ENCODE measurements at regions of chr1 and their contacts with region 1.

Region 1: DNA sequence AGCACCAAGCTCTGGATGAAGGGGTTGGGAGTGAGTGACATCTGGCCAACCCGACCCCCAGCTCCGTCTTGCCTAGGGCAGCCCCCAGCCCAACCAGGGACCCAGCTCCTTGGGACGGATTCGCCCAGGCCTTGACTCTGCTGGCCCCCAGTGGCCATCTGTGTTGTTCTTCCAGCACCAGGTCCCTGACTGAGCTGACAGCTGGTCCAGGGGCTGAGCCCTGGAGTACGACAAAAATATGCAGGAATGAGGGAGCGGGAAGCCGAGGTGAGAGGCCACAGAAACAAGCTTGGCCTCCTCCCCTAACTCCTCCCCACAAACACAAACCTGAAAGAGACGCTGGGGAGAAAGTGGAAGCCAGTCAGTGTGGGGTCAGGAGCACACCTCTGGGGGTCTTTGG is 55.0 kb upstream of the PAX7 start:
- H3K4me3 ChIP-seq: no peak overlapping the region
- H3K27ac ChIP-seq: no peak overlapping the region
- H3K4me1 ChIP-seq: no peaks in the 10 kb centered on the region
- CTCF ChIP-seq: peak; percentile 68

Region 2: GRCh38 chr1:18166929-18167328 is 408.7 kb before region 1 on chr1:
- CTCF ChIA-PET with region 1: interaction called, 3 read pairs
- POLR2A ChIA-PET with region 1: interaction called, 10 read pairs
- H3K4me3 ChIP-seq: no peak overlapping the region
- H3K27ac ChIP-seq: no peak overlapping the region
- H3K4me1 ChIP-seq: no peaks in the 10 kb centered on the region
- CTCF ChIP-seq: no peak

Region 3: GRCh38 chr1:18532390-18533170 is 43.0 kb before region 1 on chr1:
- CTCF ChIA-PET with region 1: interaction called, 11 read pairs
- POLR2A ChIA-PET with region 1: no interaction called
- H3K4me3 ChIP-seq: no peak overlapping the region
- H3K27ac ChIP-seq: no peak overlapping the region
- H3K4me1 ChIP-seq: no peaks in the 10 kb centered on the region
- CTCF ChIP-seq: no peak

Region 4: GRCh38 chr1:18556364-18556763 is 19.3 kb before region 1 on chr1:
- CTCF ChIA-PET with region 1: interaction called, 30 read pairs
- POLR2A ChIA-PET with region 1: no interaction called
- H3K4me3 ChIP-seq: no peak overlapping the region
- H3K27ac ChIP-seq: no peak overlapping the region
- H3K4me1 ChIP-seq: no peaks in the 10 kb centered on the region
- CTCF ChIP-seq: no peak

Region 5: DNA sequence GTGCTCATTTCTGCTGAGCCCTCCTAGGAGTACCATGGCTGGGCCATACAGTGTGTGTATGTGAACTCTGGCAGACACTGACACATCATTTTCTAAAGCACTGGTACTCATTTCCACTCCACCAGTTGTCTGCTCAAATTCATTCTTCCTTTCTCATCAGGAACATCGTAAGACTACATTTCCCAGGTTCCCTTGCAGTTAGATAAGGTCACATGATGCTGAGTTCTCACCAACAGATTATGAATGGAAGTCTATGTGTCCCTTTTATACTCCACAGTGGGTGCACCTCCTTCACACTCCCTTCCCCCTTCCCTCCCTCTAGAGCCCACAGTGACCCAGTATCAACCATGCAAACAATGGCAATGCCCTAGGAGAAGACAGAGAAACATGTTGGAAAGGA is 16.7 kb after region 1 on chr1:
- CTCF ChIA-PET with region 1: interaction called, 23 read pairs
- POLR2A ChIA-PET with region 1: no interaction called
- H3K4me3 ChIP-seq: no peak overlapping the region
- H3K27ac ChIP-seq: no peak overlapping the region
- H3K4me1 ChIP-seq: no peaks in the 10 kb centered on the region
- CTCF ChIP-seq: no peak

Region 6: GRCh38 chr1:18820791-18821641 is 245.4 kb after region 1 on chr1:
- CTCF ChIA-PET with region 1: no interaction called
- POLR2A ChIA-PET with region 1: no interaction called
- H3K4me3 ChIP-seq: no peak overlapping the region
- H3K27ac ChIP-seq: no peak overlapping the region
- H3K4me1 ChIP-seq: no peaks in the 10 kb centered on the region
- CTCF ChIP-seq: peak; percentile 87

Measured in HEK293 (cell line).